ENCODE measurements at regions of chr5 and their contacts with region 1.

Region 1: GRCh38 chr5:129767906-129768380 is 20.0 kb downstream of the MINAR2 start:
- DNase-seq: peak; percentile 88
- H3K4me3 Mint-ChIP-seq: no peak overlapping the region
- H3K27ac Mint-ChIP-seq: no peak overlapping the region
- H3K4me1 Mint-ChIP-seq: peaks cover 2% of the 10 kb centered on the region
- H3K27me3 Mint-ChIP-seq: no peaks in the 10 kb centered on the region

Region 2: DNA sequence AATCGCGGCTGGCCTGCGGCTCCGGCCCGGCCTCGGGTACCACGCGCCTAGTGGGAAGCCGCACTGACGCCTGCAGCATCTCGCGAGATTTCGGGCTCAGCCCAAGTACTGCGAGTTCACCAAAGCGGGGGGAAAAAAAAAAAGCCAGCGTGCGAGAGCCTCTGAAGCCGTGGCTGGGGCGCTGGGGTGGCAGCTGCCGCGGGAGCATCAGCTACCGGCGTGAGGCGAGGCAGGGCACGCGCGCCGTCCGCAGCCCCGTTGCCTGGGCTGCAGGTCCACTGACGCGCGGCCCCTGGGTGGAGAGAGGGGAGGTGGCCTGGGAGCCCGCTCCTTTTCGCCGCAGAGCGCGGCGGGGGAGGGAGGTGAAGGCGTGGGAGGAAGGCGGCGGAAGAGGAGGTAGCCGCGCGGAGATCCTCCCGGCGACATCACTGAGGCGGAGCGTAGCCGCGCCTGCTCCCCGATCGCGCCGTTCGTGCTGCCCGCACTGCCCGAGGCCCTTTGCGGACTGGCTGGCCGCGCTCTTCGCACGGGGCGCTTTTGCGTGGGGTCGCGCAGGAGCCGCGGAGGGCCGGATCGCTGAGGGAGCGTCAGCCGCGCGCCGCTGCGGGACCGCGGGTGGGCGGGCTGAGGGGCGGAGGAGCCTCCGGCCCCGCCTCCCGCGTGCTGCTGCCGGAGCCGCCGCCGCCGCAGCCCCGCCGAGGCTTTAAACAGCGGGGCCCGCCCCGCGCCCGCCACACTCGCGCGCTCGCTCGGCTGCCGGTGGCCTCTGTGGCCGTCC is 1684.7 kb before region 1 on chr5 and contains the start of gene SLC12A2:
- CTCF ChIA-PET with region 1: no interaction called
- intact Hi-C with region 1: loop called (anchors 5 kb)
- DNase-seq: peak; percentile 90
- H3K4me3 Mint-ChIP-seq: peak within 1 kb of the TSS; percentile 93
- H3K27ac Mint-ChIP-seq: peak within 1 kb of the TSS; percentile 96
- H3K4me1 Mint-ChIP-seq: peaks cover 47% of the 10 kb centered on the region
- H3K27me3 Mint-ChIP-seq: no peaks in the 10 kb centered on the region
- total RNA-seq, gene SLC12A2: 5.3 to 6.8 TPM

Region 3: GRCh38 chr5:128693764-128694163 is 1074.2 kb before region 1 on chr5:
- CTCF ChIA-PET with region 1: no interaction called
- intact Hi-C with region 1: no loop called
- DNase-seq: no peak
- H3K4me3 Mint-ChIP-seq: no peak overlapping the region
- H3K27ac Mint-ChIP-seq: no peak overlapping the region
- H3K4me1 Mint-ChIP-seq: no peaks in the 10 kb centered on the region
- H3K27me3 Mint-ChIP-seq: no peaks in the 10 kb centered on the region

Region 4: GRCh38 chr5:129094087-129094923 is 673.6 kb before region 1 on chr5 and contains the start of gene ISOC1:
- CTCF ChIA-PET with region 1: interaction called, 3 read pairs
- intact Hi-C with region 1: loop called (anchors 5 kb)
- DNase-seq: peak; percentile 91
- H3K4me3 Mint-ChIP-seq: peak within 1 kb of the TSS; percentile 83
- H3K27ac Mint-ChIP-seq: peak within 1 kb of the TSS; percentile 37
- H3K4me1 Mint-ChIP-seq: peaks cover 32% of the 10 kb centered on the region
- H3K27me3 Mint-ChIP-seq: peaks cover 6% of the 10 kb centered on the region
- total RNA-seq, gene ISOC1: 25.9 to 27.4 TPM

Region 5: DNA sequence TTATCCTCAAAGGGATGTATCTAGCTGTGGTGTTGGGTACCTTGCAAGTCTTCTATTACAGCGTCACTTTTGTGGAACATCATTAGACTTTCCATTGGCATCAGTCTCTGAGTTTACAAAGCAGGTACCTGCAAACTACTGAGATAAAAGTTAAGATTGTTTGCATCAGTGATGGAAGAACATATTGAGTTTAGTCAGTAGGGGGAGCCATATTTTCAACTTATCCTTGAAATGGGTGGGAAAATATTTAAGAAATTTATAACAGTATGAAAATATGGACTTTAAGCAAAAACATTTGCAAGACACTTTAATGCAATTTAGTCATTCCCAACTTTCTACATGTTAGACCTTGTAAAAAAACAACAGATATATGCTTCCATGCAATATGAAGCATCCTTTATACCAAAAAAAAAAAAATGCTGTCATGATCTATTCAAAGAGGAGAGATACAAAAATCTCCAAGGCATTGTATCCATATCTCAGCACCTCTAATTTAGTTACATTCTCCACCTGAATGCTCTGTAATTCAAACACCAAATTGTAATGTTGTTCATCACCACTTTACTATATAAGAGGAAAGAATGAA is 406.4 kb before region 1 on chr5:
- CTCF ChIA-PET with region 1: no interaction called
- intact Hi-C with region 1: loop called (anchors 1 kb)
- DNase-seq: no peak
- H3K4me3 Mint-ChIP-seq: no peak overlapping the region
- H3K27ac Mint-ChIP-seq: no peak overlapping the region
- H3K4me1 Mint-ChIP-seq: no peaks in the 10 kb centered on the region
- H3K27me3 Mint-ChIP-seq: no peaks in the 10 kb centered on the region

Region 6: GRCh38 chr5:129541644-129542251 is 226.2 kb before region 1 on chr5:
- CTCF ChIA-PET with region 1: interaction called, 3 read pairs
- intact Hi-C with region 1: loop called (anchors 1 kb)
- DNase-seq: no peak
- H3K4me3 Mint-ChIP-seq: no peak overlapping the region
- H3K27ac Mint-ChIP-seq: no peak overlapping the region
- H3K4me1 Mint-ChIP-seq: no peaks in the 10 kb centered on the region
- H3K27me3 Mint-ChIP-seq: no peaks in the 10 kb centered on the region

Region 7: DNA sequence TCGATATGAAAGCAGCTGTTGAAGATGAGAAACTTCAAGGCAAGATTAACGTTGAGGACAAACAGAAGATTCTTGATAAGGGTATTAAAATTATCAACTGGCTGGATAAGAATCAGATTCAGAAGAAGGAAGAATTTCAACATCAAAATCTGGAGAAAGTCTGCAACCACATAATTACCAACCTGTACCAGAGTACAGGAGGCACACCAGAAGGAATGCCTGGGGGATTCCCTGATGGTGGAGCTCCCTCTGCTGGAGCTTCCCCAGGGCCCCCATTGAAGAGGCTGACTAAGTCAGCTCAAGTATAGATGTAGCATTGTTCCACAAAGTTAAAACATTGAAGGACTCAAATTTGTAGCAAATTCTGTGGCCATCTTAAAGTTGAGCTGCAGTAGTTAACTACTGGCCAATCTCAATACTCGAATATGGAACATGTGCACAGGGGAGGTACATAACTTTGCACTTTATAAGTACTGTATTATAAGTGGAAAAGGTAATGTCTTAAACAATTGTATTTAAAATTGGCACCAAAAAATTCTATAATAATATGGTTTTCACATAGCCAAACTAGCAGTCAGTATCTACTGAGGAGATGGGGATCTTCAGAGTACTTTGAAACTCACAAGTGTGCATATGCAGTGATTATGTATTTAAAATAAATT is 373.8 kb after region 1 on chr5:
- CTCF ChIA-PET with region 1: interaction called, 12 read pairs
- intact Hi-C with region 1: loop called (anchors 1 kb)
- DNase-seq: peak; percentile 46
- H3K4me3 Mint-ChIP-seq: no peak overlapping the region
- H3K27ac Mint-ChIP-seq: no peak overlapping the region
- H3K4me1 Mint-ChIP-seq: no peaks in the 10 kb centered on the region
- H3K27me3 Mint-ChIP-seq: peaks cover 7% of the 10 kb centered on the region

Region 8: DNA sequence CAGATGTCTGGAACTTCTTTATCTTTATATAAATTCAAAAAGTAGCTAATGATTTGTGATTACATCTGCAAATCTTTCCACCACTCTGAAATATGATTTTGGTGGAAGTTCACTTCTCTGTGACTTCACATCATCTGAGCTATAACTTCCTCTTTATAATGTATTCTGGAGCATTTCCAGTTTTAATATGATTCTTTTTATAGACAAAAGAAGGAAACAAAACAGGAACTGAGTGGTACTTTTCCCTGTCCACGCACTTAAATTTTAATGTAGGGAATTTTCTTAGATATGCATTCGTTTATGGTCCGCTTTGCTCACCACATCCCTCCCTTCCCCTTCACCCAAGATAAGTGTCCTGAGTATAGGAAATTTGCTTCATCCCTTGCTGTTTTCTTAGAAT is 469.8 kb after region 1 on chr5:
- CTCF ChIA-PET with region 1: no interaction called
- intact Hi-C with region 1: no loop called
- DNase-seq: no peak
- H3K4me3 Mint-ChIP-seq: no peak overlapping the region
- H3K27ac Mint-ChIP-seq: no peak overlapping the region
- H3K4me1 Mint-ChIP-seq: no peaks in the 10 kb centered on the region
- H3K27me3 Mint-ChIP-seq: no peaks in the 10 kb centered on the region

Region 9: GRCh38 chr5:130496215-130496614 is 728.3 kb after region 1 on chr5:
- CTCF ChIA-PET with region 1: no interaction called
- intact Hi-C with region 1: no loop called
- DNase-seq: no peak
- H3K4me3 Mint-ChIP-seq: no peak overlapping the region
- H3K27ac Mint-ChIP-seq: no peak overlapping the region
- H3K4me1 Mint-ChIP-seq: no peaks in the 10 kb centered on the region
- H3K27me3 Mint-ChIP-seq: no peaks in the 10 kb centered on the region

Region 10: GRCh38 chr5:131417240-131417869 is 1649.4 kb after region 1 on chr5:
- CTCF ChIA-PET with region 1: no interaction called
- intact Hi-C with region 1: loop called (anchors 5 kb)
- DNase-seq: peak; percentile 95
- H3K4me3 Mint-ChIP-seq: peak overlapping the region; percentile 34
- H3K27ac Mint-ChIP-seq: peak overlapping the region; percentile 81
- H3K4me1 Mint-ChIP-seq: peaks cover 41% of the 10 kb centered on the region
- H3K27me3 Mint-ChIP-seq: no peaks in the 10 kb centered on the region